ENCODE measurements at regions of chr22 and their contacts with region 1.

Region 1: DNA sequence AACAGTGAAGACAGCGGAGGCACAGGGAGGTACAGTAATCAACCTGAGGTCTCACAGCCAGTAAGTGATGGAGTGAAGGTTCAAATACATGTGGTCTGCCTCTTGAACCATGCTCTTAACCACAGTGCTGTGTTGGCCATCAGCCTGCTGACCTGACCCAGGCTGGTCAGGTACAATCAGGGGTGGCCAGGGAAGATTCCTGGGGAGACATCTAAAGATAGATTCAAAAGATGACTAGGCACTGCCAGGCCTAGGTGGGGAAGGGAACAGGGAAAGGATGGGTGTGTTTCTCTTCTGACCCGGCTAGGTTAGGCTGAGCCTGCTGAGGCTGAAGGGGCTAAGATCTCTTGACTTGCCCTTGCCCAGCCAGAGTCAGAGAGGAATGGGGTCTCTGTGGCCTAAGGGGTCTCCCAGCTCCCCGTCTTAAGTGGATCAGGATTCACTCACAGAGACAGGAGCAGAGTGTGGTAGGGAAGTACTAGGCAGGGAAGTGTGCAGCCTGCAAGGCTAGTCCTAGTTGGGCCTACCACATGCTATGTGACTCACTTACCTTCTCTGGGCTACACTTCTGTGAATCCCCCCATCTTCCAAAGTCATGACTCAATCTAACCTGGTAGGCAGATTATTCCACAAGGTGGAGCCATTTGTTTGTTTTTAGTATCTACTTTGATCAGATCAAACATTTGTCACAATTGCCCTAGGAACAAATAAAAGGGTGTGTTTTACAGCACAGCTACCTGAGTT is 10.4 kb upstream of the SREBF2 start:
- DNase-seq: peak in 8 of 9 donors; percentile 30 to 78 (median 70)
- ATAC-seq: peak; percentile 87
- H3K4me3 ChIP-seq: no peak overlapping the region
- H3K4me3 Mint-ChIP-seq: no peak overlapping the region
- H3K27ac ChIP-seq: peak overlapping the region; percentile 4
- H3K27ac Mint-ChIP-seq: peak overlapping the region; percentile 35 to 90 (median 76)
- H3K4me1 ChIP-seq: no peaks in the 10 kb centered on the region
- H3K4me1 Mint-ChIP-seq: peaks cover 5 to 33% (median 15%) of the 10 kb centered on the region in 7 donors
- H3K27me3 ChIP-seq: no peaks in the 10 kb centered on the region
- H3K27me3 Mint-ChIP-seq: no peaks in the 10 kb centered on the region

Region 2: GRCh38 chr22:41746567-41747400 is 75.7 kb before region 1 on chr22:
- CTCF ChIA-PET with region 1: interaction called, 8 read pairs
- POLR2A ChIA-PET with region 1: no interaction called
- intact Hi-C with region 1: loop called in 1 of 2 experiments (anchors 1 kb)
- DNase-seq: peak; percentile 23 to 65 (median 52)
- ATAC-seq: peak; percentile 92
- H3K4me3 ChIP-seq: no peak overlapping the region
- H3K4me3 Mint-ChIP-seq: no peak overlapping the region
- H3K27ac ChIP-seq: no peak overlapping the region
- H3K27ac Mint-ChIP-seq: peak overlapping the region in 2 of 9 donors; percentile 2 to 36
- H3K4me1 ChIP-seq: no peaks in the 10 kb centered on the region
- H3K4me1 Mint-ChIP-seq: peaks cover 0 to 6% (median 0%) of the 10 kb centered on the region in 7 donors
- H3K27me3 ChIP-seq: no peaks in the 10 kb centered on the region
- H3K27me3 Mint-ChIP-seq: peaks cover 0 to 48% (median 0%) of the 10 kb centered on the region in 5 donors

Region 3: DNA sequence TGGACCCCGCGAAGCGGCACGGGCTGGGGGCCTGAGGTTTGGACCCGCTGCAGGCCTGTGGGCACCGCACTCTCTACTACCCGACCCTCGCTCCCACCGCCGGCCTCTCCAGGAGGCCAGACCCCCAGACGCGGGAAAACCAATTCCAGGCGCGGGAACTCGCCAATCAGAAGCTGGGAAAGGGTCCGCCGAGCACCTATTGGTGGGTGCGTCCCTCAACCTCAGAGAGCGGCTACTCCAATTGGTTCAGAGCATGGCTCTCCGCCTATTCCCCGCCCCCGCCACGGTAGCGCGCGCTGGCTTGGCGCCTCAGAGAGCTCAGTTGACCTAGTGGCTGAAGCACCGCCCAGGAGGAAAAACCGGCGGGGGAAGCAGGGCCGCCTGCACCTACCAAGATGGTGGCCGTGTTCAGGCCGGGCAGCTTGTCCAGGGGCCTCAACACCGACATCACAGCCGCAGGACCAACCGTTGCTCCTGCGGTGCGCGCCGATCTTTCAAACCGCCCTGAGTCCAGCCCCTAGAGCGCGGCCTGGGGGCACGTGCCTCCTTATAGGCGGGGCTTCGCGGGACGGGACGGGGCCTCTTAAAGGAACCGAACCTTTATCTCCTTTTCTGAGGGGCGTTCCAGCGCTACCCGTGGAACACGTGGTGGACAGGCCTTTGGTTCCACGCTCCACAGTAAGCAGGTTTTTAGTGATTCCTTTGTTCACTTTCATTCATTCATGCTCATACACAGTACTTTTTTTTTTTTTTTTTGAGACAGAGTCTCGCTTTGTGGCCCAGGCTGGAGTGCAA is 124.3 kb after region 1 on chr22 and contains the start of gene CENPM:
- CTCF ChIA-PET with region 1: interaction called, 15 read pairs
- POLR2A ChIA-PET with region 1: no interaction called
- intact Hi-C with region 1: no loop called
- DNase-seq: peak; percentile 71 to 94 (median 84)
- ATAC-seq: peak; percentile 97
- H3K4me3 ChIP-seq: peak within 1 kb of the TSS; percentile 82
- H3K4me3 Mint-ChIP-seq: peak within 1 kb of the TSS; percentile 83 to 93 (median 91)
- H3K27ac ChIP-seq: peak within 1 kb of the TSS; percentile 37
- H3K27ac Mint-ChIP-seq: peak within 1 kb of the TSS in 7 of 9 donors; percentile 63 to 93 (median 68)
- H3K4me1 ChIP-seq: peaks cover 3 to 13% of the 10 kb centered on the region in 2 donors
- H3K4me1 Mint-ChIP-seq: peaks cover 0 to 41% (median 10%) of the 10 kb centered on the region in 7 donors
- H3K27me3 ChIP-seq: no peaks in the 10 kb centered on the region
- H3K27me3 Mint-ChIP-seq: no peaks in the 10 kb centered on the region
- total RNA-seq, gene CENPM: 5.1 to 51.1 (median 10.8) TPM

Measured in naive thymus-derived CD4-positive, alpha-beta T cell (primary cell).